Sciatic nerve (tissue), 2 donors: ENCODE measurements at regions of chr9 and their contacts with region 1.

Region 1: DNA sequence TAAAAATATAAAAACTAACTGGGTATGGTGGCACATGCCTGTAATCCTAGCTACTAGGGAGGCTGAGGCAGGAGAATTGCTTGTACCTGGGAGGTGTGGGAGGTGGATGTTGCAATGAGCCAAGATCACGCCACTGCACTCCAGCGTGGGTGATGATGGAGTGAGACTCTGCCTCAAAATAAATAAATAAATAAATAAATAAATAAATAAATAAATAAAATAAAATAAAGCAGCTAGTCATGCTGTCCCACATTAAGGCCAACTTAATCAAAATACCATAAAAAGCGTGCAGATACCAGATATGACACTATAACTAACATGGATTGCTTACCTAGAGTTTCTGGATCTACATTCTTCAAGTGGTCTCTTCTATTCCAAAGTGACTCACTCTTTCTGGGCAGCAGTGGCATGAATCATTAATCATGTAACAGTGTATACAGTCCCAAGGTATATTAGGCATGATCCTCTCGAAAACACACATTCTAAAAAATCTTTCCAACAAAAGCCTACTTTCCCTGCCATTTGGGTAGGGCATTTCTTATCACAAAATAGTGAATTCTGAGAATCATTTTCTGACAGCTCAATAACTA is 187.1 kb downstream of the ELAVL2 start:
- DNase-seq: no peak
- ATAC-seq: no peak

Region 2: GRCh38 chr9:23571414-23572104 is 67.4 kb before region 1 on chr9:
- intact Hi-C with region 1: loop called (anchors 10 kb)
- DNase-seq: no peak
- ATAC-seq: no peak

Region 3: DNA sequence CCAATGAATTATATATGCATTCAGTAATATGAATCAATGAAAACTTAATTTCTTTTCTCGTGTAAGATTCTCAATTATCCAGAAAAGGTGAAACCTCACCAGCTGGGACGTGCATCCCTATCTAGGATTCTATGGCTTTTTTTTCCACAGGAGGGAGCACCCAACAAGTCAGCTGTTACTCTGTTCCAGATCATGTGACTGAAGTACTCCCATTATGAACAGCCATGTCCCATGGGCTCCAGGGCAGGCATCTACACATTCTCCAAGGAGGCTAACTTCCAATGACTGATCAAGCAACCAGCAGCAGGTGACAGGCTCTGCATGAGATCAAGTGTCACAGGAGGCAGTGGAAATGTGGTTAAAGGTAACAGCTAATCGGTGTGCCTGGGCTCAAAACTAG is 68.3 kb after region 1 on chr9:
- intact Hi-C with region 1: no loop called
- DNase-seq: no peak
- ATAC-seq: no peak